GM10248 (cell line): ENCODE measurements at regions of chr15 and their contacts with region 1.

Region 1: DNA sequence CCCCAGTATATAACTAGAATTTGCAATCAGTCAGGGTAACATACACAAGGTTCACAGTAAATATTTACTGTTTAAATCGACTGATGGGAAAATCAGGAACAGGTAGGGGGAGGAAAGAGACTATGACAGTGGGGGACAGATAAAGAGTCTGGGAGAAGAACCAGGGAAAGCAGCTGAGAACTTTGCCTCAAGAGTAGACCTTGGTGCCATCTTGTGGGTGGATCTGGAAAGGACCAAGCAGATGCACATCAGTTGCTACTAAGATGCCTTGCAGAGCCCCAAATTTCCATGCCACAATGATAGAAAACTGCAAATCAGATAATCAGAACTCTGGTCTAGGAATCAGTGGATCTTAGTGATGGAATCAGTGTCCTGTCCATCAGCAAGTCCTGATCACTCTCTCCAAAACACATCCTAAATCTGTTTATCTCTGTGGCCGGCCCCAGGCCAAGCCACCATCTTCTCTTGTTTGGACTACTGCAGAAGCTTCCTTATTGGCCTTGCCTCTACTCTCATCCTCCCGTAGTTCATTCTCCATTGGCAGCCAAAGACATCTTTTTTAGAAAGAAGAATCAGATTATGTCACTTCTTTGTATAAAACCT is 62.7 kb downstream of the PDE8A start:
- DNase-seq: no peak
- CTCF ChIP-seq: peak; percentile 71

Region 2: GRCh38 chr15:84955089-84955848 is 89.1 kb before region 1 on chr15:
- CTCF ChIA-PET with region 1: interaction called, 35 read pairs
- POLR2A ChIA-PET with region 1: no interaction called
- DNase-seq: peak; percentile 64
- CTCF ChIP-seq: peak; percentile 74

Region 3: DNA sequence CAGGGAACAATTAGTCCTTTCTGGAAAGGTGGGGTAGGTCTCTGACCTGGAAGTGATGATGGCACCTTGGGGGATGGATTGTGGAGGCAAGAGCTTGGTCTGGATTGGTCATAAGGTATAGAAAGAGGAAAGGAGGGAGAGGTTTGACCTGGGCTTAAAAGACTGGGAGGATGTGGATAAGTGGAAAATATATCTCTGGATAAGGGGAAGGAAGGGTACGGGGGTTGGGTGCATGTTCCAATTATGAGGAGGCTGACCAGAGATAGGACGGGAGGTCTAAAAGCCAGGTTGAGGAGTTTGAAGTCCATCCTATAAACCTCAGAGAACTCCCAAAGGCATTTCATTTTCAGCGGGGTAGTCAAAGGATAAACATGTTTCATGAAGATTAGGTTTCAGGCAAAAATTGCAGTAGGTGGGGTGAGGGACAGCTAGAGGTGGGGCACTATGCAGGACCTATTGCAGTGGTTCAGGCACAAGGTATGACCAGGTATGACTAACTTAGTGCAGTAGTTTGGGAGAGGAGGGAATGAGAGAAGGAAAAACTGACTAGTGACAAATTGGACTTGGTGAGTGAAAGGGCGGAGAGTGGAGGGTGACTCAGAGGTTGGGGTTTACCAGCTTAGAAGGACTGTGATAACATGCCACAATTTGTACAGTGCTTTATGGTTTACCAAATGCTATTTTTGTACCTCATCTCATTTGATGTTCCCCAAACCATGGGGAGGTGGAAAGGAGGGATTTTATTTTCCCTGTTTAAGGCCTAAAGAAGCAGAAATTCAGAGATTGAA is 52.0 kb before region 1 on chr15:
- CTCF ChIA-PET with region 1: interaction called, 11 read pairs
- POLR2A ChIA-PET with region 1: no interaction called
- DNase-seq: no peak
- CTCF ChIP-seq: no peak

Region 4: GRCh38 chr15:85059734-85060133 is 15.4 kb after region 1 on chr15:
- CTCF ChIA-PET with region 1: interaction called, 12 read pairs
- POLR2A ChIA-PET with region 1: no interaction called
- DNase-seq: no peak
- CTCF ChIP-seq: no peak

Region 5: GRCh38 chr15:85154061-85154460 is 109.7 kb after region 1 on chr15:
- CTCF ChIA-PET with region 1: no interaction called
- POLR2A ChIA-PET with region 1: no interaction called
- DNase-seq: no peak
- CTCF ChIP-seq: no peak